AG04450 (cell line): ENCODE measurements at regions of chr6 and their contacts with region 1.

Region 1: GRCh38 chr6:116111552-116112528 is 11.2 kb downstream of the NT5DC1 start:
- DNase-seq: no peak
- H3K4me3 ChIP-seq: no peak overlapping the region
- H3K27ac ChIP-seq: no peak overlapping the region
- H3K27me3 ChIP-seq: no peaks in the 10 kb centered on the region
- CTCF ChIP-seq: peak; percentile 70

Region 2: DNA sequence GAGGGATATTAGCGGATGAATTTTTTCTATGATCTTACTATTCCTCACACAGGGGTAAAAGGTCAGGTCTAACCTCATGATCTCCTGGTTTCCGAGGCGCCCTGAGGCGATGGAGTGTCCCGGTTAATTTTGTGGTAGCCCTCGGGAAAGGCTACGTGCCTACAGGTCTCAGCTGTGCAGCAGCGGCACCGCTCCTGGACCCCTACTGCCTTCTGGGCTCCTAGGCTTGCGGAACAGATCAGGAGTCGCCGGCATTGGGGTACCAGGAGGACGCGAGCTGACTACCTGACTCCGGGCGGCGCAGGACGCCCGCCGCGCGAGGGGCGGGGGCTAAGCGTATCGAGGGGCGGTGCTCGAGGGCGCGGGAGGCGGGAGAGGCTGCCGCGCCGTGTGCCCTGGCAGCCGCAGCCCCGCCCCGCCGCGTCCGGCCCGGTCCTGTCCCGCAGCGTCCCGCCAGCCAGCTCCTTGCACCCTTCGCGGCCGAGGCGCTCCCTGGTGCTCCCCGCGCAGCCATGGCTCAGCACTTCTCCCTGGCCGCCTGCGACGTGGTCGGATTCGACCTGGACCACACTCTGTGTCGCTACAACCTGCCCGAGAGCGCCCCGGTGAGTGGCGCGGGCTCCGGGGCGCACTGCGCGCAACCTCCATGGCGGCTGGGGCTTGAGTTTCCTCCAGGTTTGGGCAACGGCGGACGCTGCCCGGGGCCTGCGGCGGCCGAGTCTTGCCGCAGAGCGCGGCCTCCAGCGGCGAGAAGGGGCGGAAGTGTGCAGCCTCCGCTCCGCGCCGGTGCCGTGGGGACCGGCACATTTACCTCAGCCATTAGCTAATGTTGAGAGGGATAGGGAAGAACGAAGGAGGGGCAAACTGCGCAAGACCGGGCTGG is 11.2 kb before region 1 on chr6 and contains the start of gene NT5DC1:
- CTCF ChIA-PET with region 1: interaction called, 27 read pairs
- POLR2A ChIA-PET with region 1: no interaction called
- DNase-seq: no peak
- H3K4me3 ChIP-seq: peak within 1 kb of the TSS; percentile 89
- H3K27ac ChIP-seq: peak within 1 kb of the TSS; percentile 65
- H3K27me3 ChIP-seq: no peaks in the 10 kb centered on the region
- CTCF ChIP-seq: peak; percentile 31
- polyA plus RNA-seq, gene NT5DC1: 20.9 and 23.2 TPM in 2 replicates

Region 3: DNA sequence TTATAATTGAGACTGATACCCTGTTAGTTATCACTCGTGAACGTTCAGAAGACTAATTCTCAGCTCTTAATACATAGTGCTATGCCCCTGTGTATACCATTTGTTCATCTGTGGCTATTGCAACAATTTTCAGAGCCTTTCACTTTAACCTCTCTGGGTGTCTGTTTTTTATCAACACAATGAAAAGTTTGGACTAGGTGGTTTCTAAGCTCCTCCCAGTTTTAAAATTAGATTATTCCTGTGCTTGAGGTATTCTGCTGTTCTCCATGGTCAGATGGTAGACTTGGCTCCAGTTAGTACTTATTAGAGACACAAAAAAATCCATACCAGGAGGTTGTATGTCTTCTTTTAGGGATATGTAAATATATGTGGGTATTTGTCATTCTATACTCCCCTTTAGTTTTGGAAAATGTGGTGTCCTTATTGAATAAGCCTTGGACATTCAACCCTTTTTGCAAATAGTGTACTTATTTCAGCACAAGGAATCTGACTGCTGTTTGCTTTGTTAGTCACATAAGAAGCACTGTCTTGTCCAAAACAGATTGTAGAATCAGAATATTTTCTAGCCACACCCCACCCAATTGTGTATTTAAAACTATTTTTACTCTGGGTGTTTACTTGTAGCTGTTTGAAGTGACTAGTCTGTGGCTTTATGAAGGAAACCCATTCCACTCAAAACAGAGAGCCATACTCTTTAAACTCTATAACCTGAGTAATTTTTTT is 16.1 kb after region 1 on chr6:
- CTCF ChIA-PET with region 1: interaction called, 27 read pairs
- POLR2A ChIA-PET with region 1: no interaction called
- DNase-seq: no peak
- H3K4me3 ChIP-seq: no peak overlapping the region
- H3K27ac ChIP-seq: no peak overlapping the region
- H3K27me3 ChIP-seq: no peaks in the 10 kb centered on the region
- CTCF ChIP-seq: no peak